ENCODE measurements at regions of chr16 and their contacts with region 1.

Region 1: DNA sequence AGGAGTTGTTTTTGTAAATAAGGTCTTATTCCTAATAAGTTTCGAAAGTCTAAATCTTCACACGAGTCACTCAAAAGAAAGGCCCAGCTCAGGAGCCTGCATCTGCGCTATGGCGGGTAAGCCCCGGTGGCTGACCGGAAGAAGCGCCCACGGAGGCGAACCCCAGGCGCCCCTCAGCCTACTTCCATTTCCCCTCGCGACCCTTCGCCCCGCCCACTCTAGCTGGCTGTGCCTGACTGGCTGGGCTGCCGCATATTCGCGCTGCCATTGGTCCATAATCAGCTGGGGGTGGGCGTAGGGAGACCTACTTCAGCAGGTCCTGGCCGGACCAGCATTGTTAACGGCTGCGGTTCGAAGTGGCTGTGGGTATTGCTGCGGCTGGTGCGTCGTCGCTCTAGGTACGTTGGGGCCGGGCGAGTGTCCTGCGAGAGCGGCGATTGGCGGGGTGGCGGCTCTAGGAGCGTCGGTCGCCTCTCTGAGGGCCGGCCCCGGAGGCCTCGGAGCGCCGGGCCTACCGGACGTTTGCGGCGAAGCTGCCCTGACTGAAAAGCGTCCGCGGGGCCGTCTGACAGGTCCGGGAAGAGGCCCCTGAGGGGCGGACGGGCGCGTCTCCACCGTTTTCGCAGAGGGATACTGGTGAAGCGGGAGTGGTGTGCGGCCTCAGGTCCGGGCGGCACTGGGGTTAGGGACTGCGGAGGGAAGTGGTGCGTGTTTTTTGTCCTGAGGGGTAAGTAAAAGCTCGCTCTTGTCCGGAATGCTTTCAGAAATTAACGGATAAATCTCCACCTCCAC is at the start of gene ATF7IP2:
- DNase-seq: peak; percentile 85
- H3K4me3 Mint-ChIP-seq: peak within 1 kb of the TSS; percentile 97
- H3K27ac Mint-ChIP-seq: peak within 1 kb of the TSS; percentile 95
- H3K4me1 Mint-ChIP-seq: peaks cover 40% of the 10 kb centered on the region
- H3K27me3 Mint-ChIP-seq: no peaks in the 10 kb centered on the region
- total RNA-seq, gene ATF7IP2: 22.9 and 28.1 TPM in 2 replicates

Region 2: DNA sequence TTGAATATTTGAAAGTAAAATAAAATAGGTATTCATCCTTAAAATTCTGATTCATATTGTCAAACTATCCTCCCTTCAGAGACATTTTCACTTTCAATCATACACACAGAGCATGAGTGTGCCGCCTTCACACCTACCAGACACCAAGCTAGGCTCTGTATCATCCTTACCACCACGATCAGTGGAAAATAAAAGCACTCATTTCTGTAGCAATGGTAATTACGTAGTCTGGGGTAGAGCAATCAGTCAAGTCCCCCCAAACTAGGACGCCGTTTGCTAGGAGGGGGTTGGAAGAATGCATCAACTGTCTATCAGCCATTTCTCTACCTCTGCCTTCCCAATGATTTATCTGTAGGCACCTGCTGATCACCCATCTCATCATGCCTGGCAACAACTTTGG is 119.1 kb before region 1 on chr16:
- intact Hi-C with region 1: loop called (anchors 5 kb)
- DNase-seq: no peak
- H3K4me3 Mint-ChIP-seq: no peak overlapping the region
- H3K27ac Mint-ChIP-seq: no peak overlapping the region
- H3K4me1 Mint-ChIP-seq: peaks cover 7% of the 10 kb centered on the region
- H3K27me3 Mint-ChIP-seq: no peaks in the 10 kb centered on the region

Region 3: DNA sequence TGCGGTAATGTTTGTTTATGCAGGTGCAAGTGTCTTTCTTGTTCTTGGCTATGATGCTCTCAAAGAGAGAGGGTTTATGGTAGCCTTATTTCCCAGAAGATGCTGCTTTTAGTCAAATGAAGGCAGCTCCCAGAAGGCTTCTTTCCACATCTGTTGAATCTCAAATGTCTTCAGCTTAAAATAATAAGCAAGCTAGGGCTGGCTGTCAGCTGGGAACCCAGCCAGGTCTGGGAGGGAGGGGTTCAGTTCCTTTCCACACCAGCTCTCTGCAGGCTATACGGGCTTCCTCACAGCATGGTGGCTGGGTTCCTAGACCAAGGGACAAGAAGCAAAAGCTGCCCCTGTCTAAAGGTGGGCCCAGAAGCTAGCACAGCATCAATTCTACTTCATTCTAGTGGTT is 47.5 kb before region 1 on chr16:
- intact Hi-C with region 1: loop called (anchors 10 kb)
- DNase-seq: no peak
- H3K4me3 Mint-ChIP-seq: no peak overlapping the region
- H3K27ac Mint-ChIP-seq: no peak overlapping the region
- H3K4me1 Mint-ChIP-seq: peaks cover 3% of the 10 kb centered on the region
- H3K27me3 Mint-ChIP-seq: no peaks in the 10 kb centered on the region

Region 4: GRCh38 chr16:10453159-10453510 is 67.2 kb after region 1 on chr16:
- intact Hi-C with region 1: loop called (anchors 10 kb)
- DNase-seq: no peak
- H3K4me3 Mint-ChIP-seq: no peak overlapping the region
- H3K27ac Mint-ChIP-seq: no peak overlapping the region
- H3K4me1 Mint-ChIP-seq: peaks cover 9% of the 10 kb centered on the region
- H3K27me3 Mint-ChIP-seq: no peaks in the 10 kb centered on the region

Region 5: DNA sequence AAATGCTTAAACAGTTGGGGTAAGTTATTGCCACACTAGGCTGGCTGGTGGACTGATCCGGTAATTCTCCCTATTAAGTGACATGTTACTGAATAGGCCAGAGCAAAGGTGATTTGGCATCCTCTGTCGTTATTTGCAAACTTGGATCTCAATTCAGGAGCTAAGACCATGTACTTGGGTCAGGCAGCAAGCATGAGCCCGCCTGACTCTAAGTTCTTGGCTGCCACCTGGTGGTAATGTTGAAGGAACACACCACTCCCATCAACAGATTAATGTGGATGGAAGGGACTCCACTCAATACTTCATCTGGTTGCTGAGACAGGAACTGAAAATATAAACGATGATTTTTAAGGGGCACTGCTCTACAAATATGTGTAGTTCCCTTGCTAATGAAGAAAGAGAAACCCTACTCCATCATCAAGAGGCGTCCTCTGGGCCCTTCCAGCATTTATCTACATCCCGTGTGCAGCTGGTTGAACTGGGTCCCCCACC is 123.7 kb after region 1 on chr16:
- intact Hi-C with region 1: loop called (anchors 10 kb)
- DNase-seq: peak; percentile 49
- H3K4me3 Mint-ChIP-seq: no peak overlapping the region
- H3K27ac Mint-ChIP-seq: no peak overlapping the region
- H3K4me1 Mint-ChIP-seq: peaks cover 2% of the 10 kb centered on the region
- H3K27me3 Mint-ChIP-seq: peaks cover 2% of the 10 kb centered on the region

Region 6: DNA sequence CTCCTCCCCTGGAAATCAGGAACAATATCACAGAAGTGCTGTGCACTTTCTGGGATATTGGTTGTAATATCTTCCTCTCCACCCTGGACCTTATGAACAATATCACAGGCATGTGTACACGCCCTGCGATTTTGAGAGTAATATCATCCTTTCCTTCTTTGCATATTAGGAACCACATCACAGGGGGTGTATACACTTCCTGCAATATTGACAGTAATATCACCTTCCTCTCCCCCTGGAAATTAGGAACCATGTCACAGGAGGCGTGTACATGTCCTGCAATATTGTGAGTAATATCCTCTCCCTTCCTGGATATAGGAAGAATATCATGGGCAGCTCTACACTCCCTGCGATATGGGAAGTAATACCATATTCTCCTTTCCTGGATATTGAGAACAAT is 323.0 kb after region 1 on chr16:
- intact Hi-C with region 1: loop called (anchors 10 kb)
- DNase-seq: no peak
- H3K4me3 Mint-ChIP-seq: no peak overlapping the region
- H3K27ac Mint-ChIP-seq: no peak overlapping the region
- H3K4me1 Mint-ChIP-seq: no peaks in the 10 kb centered on the region
- H3K27me3 Mint-ChIP-seq: no peaks in the 10 kb centered on the region

Region 7: DNA sequence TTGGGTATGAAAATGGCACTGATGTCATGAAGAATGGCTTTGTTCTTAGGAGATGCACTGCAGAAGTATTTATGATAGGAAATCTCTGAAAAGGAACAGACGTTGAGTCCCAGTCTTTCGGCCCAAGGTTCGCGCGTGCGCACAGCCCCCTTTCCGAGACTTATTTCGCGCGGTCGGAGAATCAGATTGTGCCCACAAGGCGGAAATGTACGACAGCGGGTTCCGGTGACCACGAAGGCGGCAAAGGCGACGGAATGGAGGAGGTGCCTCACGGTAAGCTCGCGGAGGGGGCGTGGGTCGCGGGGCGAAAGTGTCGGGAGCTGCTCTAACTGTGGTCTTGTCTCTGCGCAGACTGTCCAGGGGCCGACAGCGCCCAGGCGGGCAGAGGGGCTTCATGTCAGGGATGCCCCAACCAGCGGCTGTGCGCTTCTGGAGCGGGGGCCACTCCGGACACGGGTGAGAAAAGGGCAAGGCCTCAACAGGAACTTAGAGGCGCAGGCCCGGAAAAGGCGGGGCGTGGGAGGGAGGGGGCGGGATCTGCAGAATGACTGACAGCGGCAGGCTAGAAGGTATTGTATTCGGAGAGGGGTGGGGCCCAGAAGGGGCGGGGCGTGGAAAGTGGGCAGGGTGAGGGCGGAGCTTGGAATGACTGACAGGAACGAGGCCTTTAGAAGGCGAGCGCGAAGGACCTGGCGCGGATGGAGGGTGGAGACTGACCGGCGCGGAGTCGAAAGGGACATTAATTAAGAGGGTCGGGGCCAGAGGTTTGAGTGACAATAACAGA is 357.9 kb after region 1 on chr16 and contains the start of gene NUBP1:
- intact Hi-C with region 1: loop called (anchors 5 kb)
- DNase-seq: peak; percentile 96
- H3K4me3 Mint-ChIP-seq: peak within 1 kb of the TSS; percentile 88
- H3K27ac Mint-ChIP-seq: peak within 1 kb of the TSS; percentile 96
- H3K4me1 Mint-ChIP-seq: peaks cover 44% of the 10 kb centered on the region
- H3K27me3 Mint-ChIP-seq: no peaks in the 10 kb centered on the region
- total RNA-seq, gene NUBP1: 33.9 and 35.9 TPM in 2 replicates

Measured in activated T-helper 2 cell treated with anti-CD3 and anti-CD28 coated beads, Interferon-gamma antibody, Interleukin-2, Interleukin-4, amounts not matched to agents 10 μg/mL and 5 μg/mL and 100 μg/mL, durations not matched to agents 14 hours and 24 hours and 36 hours (primary cell).